Gastrocnemius medialis (tissue), 4 donors: ENCODE measurements at regions of chr3 and their contacts with region 1.

Region 1: DNA sequence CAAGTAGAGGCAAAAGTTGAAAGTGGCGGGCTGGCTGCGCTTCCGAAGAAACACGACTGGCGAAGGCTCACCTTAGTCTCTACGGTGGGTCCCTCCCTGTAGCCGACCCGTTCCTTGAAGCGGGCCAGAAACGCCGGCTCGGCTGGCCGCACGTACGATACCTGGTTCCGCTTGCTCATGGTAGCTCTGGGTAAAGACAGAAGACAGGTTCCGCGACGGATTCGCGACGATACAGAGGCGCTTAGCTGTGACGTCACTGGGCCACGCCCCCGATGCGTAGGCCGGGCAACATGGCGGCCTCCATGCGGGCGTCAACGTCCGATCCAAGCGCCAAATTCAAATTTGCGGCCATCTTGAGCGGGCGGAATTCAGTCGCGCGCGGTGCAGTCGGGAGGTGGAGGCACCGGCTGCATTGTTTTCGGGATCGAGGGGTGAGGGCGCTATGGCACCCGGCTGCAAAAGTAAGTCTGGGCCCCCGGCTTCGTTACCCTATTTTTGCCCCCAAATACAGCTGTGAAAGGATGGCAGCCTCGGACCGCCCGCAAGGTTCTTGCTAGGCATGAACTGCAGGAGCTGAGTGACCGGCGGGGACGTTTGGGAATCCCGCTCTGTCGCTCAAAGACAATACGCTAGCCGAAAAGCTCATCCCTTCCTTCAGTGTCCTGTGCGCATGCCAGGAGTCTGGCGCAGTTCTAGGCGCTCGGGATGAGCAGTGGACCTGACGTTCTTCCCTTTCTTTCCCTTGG is at the starts of genes KIAA1143 and KIF15:
- DNase-seq: peak; percentile 90 to 93
- ATAC-seq: peak; percentile 100
- H3K4me3 ChIP-seq: peak within 1 kb of the TSS; percentile 60 to 100 (median 74)
- H3K27ac ChIP-seq: peak within 1 kb of the TSS; percentile 77 to 91 (median 88)
- H3K4me1 ChIP-seq: peaks cover 11 to 12% of the 10 kb centered on the region in 2 donors
- H3K27me3 ChIP-seq: no peaks in the 10 kb centered on the region
- CTCF ChIP-seq: no peak
- POLR2A ChIP-seq: peak; percentile 59 to 76
- total RNA-seq, gene KIAA1143: 28.5 to 36.2 (median 31.4) TPM
- total RNA-seq, gene KIF15: 0.25 to 1.6 (median 0.38) TPM

Region 2: GRCh38 chr3:44624749-44625480 is 136.7 kb before region 1 on chr3 and contains the start of gene ZNF197:
- in situ Hi-C with region 1: no loop called
- intact Hi-C with region 1: loop called (anchors 1 kb)
- DNase-seq: peak; percentile 77 to 84
- ATAC-seq: peak; percentile 98 to 99
- H3K4me3 ChIP-seq: peak within 1 kb of the TSS; percentile 69 to 93 (median 81)
- H3K27ac ChIP-seq: peak within 1 kb of the TSS; percentile 82 to 93 (median 92)
- H3K4me1 ChIP-seq: peaks cover 11 to 30% of the 10 kb centered on the region in 2 donors
- H3K27me3 ChIP-seq: no peaks in the 10 kb centered on the region
- CTCF ChIP-seq: peak in 1 of 5 experiments; percentile 40
- POLR2A ChIP-seq: peak in 1 of 2 donors; percentile 58
- total RNA-seq, gene ZNF197: 14.3 to 21.5 (median 19.6) TPM

Region 3: GRCh38 chr3:44712455-44713075 is 49.0 kb before region 1 on chr3 and contains the start of gene ZNF502:
- in situ Hi-C with region 1: no loop called
- intact Hi-C with region 1: loop called (anchors 1 kb)
- DNase-seq: peak; percentile 60 to 78
- ATAC-seq: peak; percentile 75 to 96
- H3K4me3 ChIP-seq: peak within 1 kb of the TSS; percentile 68 to 90 (median 88)
- H3K27ac ChIP-seq: peak within 1 kb of the TSS; percentile 60 to 70 (median 66)
- H3K4me1 ChIP-seq: peaks cover 0 to 4% of the 10 kb centered on the region in 2 donors
- H3K27me3 ChIP-seq: peaks cover 0 to 3% (median 0%) of the 10 kb centered on the region in 3 donors
- CTCF ChIP-seq: peak in 3 of 5 experiments; percentile 31 to 45 (median 42)
- POLR2A ChIP-seq: peak in 1 of 2 donors; percentile 34
- total RNA-seq, gene ZNF502: 1.8 to 4.8 (median 1.9) TPM

Region 4: GRCh38 chr3:44861412-44862220 is 100.0 kb after region 1 on chr3 and contains the start of gene TMEM42:
- in situ Hi-C with region 1: no loop called
- intact Hi-C with region 1: loop called (anchors 2 kb)
- DNase-seq: peak; percentile 77 to 85
- ATAC-seq: peak; percentile 96 to 97
- H3K4me3 ChIP-seq: peak within 1 kb of the TSS; percentile 70 to 92 (median 81)
- H3K27ac ChIP-seq: peak within 1 kb of the TSS; percentile 84 to 97 (median 90)
- H3K4me1 ChIP-seq: peaks cover 11 to 17% of the 10 kb centered on the region in 2 donors
- H3K27me3 ChIP-seq: no peaks in the 10 kb centered on the region
- CTCF ChIP-seq: no peak
- POLR2A ChIP-seq: peak; percentile 84
- total RNA-seq, gene TMEM42: 7.2 to 19.7 (median 14.9) TPM